Uterus (tissue), 4 donors: ENCODE measurements at regions of chr6 and their contacts with region 1.

Region 1: GRCh38 chr6:71383901-71384489 is 95.4 kb downstream of the OGFRL1 start:
- DNase-seq: no peak
- H3K4me3 ChIP-seq: no peak overlapping the region
- H3K27ac ChIP-seq: no peak overlapping the region
- H3K4me1 ChIP-seq: no peaks in the 10 kb centered on the region
- H3K27me3 ChIP-seq: no peaks in the 10 kb centered on the region
- CTCF ChIP-seq: peak; percentile 52 to 83 (median 62)
- POLR2A ChIP-seq: no peak

Region 2: DNA sequence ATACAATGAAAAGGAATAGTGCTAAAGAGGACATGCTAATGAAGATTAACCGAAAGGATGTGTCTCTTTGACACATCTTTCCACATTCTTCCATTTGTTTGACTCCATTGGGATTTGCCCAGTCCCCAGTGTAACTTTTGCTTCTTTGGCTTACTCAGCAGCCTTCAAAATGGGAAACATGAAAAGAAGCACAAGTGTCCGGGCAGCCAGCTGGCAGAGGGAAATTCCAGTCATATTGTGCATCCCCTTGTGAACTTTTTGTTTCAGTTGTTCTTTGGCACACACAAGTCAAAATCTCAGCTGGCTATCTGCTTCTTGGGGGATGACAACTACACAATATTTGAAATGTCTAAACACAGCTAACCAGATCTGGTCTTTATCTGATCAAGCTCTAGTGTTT is 62.1 kb after region 1 on chr6:
- intact Hi-C with region 1: no loop called
- DNase-seq: no peak
- H3K4me3 ChIP-seq: no peak overlapping the region
- H3K27ac ChIP-seq: no peak overlapping the region
- H3K4me1 ChIP-seq: no peaks in the 10 kb centered on the region
- H3K27me3 ChIP-seq: no peaks in the 10 kb centered on the region
- CTCF ChIP-seq: no peak
- POLR2A ChIP-seq: no peak

Region 3: DNA sequence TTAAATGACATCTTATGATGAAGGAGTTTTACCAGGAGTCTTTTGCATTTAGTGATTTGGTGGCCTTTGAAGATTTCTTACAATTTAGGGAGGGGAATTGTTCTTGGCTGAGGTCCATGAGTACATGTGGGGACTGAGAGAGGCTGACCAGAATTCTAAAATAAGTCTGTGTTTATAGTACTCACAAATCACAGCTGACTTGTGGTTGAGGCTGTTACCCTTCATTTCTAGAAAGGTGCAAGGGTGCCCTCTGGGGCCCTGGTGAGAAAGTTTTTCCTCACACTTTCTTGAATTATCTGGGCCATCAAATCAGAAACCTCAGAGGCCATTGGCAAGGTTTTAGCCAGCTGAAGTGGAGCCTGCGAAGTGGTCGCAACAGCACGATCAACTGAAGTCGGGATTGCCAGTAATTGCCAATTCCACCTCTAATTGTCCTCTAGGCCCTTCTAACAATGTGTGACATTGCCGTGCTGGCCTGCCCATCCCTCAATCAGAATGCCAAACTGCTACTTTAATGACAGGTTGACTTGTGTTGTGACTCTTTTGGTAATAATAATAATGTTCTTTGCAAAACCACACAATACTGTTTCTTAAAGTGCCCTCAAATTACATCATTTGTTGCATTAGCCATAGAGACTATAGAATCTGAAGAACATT is 126.2 kb after region 1 on chr6:
- intact Hi-C with region 1: loop called (anchors 10 kb)
- DNase-seq: peak; percentile 30 to 34
- H3K4me3 ChIP-seq: no peak overlapping the region
- H3K27ac ChIP-seq: no peak overlapping the region
- H3K4me1 ChIP-seq: no peaks in the 10 kb centered on the region
- H3K27me3 ChIP-seq: no peaks in the 10 kb centered on the region
- CTCF ChIP-seq: peak; percentile 49 to 68 (median 63)
- POLR2A ChIP-seq: no peak